ENCODE measurements at regions of chr14 and their contacts with region 1.

Region 1: DNA sequence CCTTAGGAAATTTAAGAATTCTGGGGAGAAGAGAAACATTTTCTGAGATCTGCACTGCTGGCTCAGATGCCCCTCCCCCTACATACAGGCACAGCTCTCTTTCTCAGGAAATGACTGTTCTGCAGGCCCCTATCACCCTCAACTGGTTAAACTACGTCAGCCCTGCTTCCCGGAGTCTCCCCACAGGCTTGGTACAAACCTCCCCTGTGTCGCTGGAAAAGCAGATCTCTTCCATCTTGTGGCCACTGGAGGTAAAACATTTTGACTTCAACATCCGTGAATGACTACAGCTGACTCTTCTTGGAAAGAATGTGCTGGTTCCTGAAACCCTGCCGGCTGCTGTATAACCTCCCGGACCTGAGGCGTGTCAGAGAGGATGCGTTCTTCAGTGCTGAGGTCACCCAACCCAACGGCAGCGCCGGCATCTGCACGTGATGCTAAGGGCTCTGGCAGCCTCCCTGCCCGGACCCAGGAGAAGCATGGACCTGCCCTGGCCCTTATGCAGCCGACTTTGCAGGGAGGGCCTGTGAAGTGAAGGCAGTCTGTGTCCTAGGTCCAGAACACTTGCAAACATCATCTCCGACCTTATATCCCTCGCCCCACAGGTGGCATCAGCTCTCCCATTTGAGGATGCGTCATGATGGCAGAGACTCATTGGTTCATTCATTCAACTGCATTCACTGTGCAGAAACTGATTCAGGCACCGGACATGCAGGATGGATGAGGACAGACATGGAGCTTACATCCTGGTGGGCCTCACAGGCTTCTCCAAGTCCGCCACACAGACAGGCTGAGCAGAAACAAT is 129.3 kb downstream of the GCH1 start:
- DNase-seq: peak; percentile 97 to 99
- ATAC-seq: peak; percentile 93 to 94
- H3K4me3 ChIP-seq: peak overlapping the region; percentile 2; the same call in 1 of the 3 replicates
- H3K27ac ChIP-seq: peak overlapping the region; percentile 77 to 86
- H3K4me1 ChIP-seq: peaks cover 27% of the 10 kb centered on the region
- CTCF ChIP-seq: peak; percentile 63
- EP300 ChIP-seq: peak in 1 of 2 experiments; percentile 51; a peak in 1 of 5 replicates
- POLR2A ChIP-seq: no peak
- RAD21 ChIP-seq: peak; percentile 72 to 80

Region 2: DNA sequence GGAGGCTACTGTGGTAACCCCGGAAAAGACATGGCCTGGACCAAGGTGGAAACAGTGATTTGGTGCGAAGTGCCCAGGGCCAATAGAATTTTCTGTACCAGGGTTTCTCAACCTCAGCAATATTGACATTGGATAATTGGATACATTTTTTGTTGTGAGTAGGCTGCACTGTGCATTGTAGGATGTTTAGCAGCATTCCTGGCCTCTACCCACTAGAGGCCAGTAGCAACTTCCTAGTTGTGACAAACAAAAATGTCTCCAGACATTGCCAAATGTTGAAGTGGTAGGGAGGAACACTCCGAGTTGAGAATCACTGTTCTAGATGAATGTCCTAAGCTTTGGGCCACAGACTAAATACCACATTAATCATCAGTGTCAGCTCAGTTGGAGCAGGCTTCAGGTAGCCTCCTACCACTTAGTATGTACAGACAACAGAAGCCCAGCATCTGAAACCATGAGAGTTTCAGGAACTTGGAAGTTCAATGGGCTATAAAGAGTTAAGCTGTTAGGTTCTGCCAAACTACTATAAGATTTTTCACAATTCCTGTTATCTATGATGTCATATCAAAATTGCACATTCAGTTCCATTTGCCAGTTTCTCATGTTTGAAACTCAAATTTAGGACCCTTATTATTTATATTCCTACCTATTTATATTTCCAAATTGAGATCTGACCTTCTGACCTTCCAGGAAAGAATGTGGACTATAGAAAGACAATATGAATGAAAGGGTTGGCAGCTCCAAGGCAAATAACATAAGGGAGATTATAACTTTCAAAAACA is 269.7 kb before region 1 on chr14:
- CTCF ChIA-PET with region 1: interaction called, 34 read pairs
- POLR2A ChIA-PET with region 1: no interaction called
- DNase-seq: peak in 1 of 2 experiments; percentile 66
- ATAC-seq: peak; percentile 80 to 89
- H3K4me3 ChIP-seq: no peak overlapping the region
- H3K27ac ChIP-seq: 0 out of 6 replicates have a peak overlapping the region, but pooled peaks of 1 of the 2 experiments have one; percentile 39
- H3K4me1 ChIP-seq: no peaks in the 10 kb centered on the region; the same call in 2 of the 3 replicates
- CTCF ChIP-seq: peak; percentile 46
- EP300 ChIP-seq: no peak
- POLR2A ChIP-seq: no peak
- RAD21 ChIP-seq: peak; percentile 39 to 54; a peak in 4 of 5 replicates

Region 3: GRCh38 chr14:54566410-54567223 is 206.8 kb before region 1 on chr14 and contains the start of gene SAMD4A:
- CTCF ChIA-PET with region 1: interaction called, 272 read pairs
- POLR2A ChIA-PET with region 1: interaction called, 78 read pairs
- DNase-seq: peak; percentile 68 to 88
- ATAC-seq: peak; percentile 60 to 71
- H3K4me3 ChIP-seq: peak within 1 kb of the TSS; percentile 75
- H3K27ac ChIP-seq: peak within 1 kb of the TSS; percentile 88 to 98
- H3K4me1 ChIP-seq: peaks cover 35% of the 10 kb centered on the region
- CTCF ChIP-seq: peak; percentile 33
- EP300 ChIP-seq: no peak
- POLR2A ChIP-seq: peak; percentile 21; the same call in 1 of the 2 replicates
- RAD21 ChIP-seq: peak; percentile 52 to 60
- polyA plus RNA-seq, gene SAMD4A: 3.9 and 5.3 TPM in 2 replicates

Region 4: GRCh38 chr14:54683882-54684794 is 89.2 kb before region 1 on chr14:
- CTCF ChIA-PET with region 1: interaction called, 23 read pairs
- POLR2A ChIA-PET with region 1: no interaction called
- DNase-seq: no peak
- ATAC-seq: peak in 1 of 2 experiments; percentile 40; a peak in 2 of 6 replicates
- H3K4me3 ChIP-seq: no peak overlapping the region
- H3K27ac ChIP-seq: peak overlapping the region; percentile 57 to 80
- H3K4me1 ChIP-seq: peaks cover 39% of the 10 kb centered on the region
- CTCF ChIP-seq: no peak
- EP300 ChIP-seq: no peak
- POLR2A ChIP-seq: no peak
- RAD21 ChIP-seq: no peak

Region 5: DNA sequence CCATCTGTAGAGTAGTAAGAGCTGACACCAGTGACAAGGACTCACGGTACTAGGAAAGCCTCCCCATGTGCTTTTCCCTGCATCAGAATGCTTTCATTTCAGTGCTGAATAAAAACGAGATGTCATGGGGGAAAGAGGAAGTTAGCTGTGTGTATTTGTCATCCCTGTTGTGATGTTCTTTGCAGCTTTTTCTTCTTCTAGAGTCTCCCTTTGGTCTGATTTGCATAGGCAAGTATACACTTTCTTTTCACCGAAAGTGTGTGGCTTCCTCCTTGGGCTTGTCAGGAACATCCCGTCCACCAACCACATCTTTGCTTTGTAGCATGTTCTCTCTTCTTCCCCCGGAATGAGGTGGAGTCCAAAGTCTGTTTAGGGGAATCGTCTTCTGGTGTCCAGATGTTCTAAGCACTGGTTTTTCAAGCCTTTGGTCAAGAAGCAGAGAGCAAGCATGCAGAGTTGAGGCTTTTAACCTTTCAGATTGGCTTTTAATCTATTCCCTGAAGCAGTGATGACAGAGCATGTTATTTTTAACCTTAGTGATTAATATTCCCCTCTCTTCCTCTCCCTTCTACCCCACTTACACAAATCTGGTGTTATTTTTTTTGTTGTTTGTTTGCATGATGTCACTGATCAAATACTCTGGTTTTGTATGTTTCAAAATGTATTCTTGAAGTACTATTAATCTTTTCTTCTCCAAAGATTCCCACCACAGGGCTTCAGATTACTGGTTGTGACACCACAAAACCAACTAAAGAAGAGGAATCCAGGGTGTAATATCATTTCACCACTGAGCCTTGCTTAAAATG is 43.0 kb before region 1 on chr14:
- CTCF ChIA-PET with region 1: interaction called, 75 read pairs
- POLR2A ChIA-PET with region 1: no interaction called
- DNase-seq: peak in 1 of 2 experiments; percentile 4
- ATAC-seq: peak in 1 of 2 experiments; percentile 36; a peak in 2 of 6 replicates
- H3K4me3 ChIP-seq: no peak overlapping the region
- H3K27ac ChIP-seq: no peak overlapping the region
- H3K4me1 ChIP-seq: peaks cover 10% of the 10 kb centered on the region; the same call in 2 of the 3 replicates
- CTCF ChIP-seq: no peak
- EP300 ChIP-seq: no peak
- POLR2A ChIP-seq: no peak
- RAD21 ChIP-seq: no peak

Region 6: GRCh38 chr14:54805521-54806322 is 32.3 kb after region 1 on chr14:
- CTCF ChIA-PET with region 1: interaction called, 51 read pairs
- POLR2A ChIA-PET with region 1: no interaction called
- DNase-seq: peak; percentile 82 to 86
- ATAC-seq: peak; percentile 90 to 96
- H3K4me3 ChIP-seq: no peak overlapping the region
- H3K27ac ChIP-seq: no peak overlapping the region
- H3K4me1 ChIP-seq: 0 out of 3 replicates have a peak, but pooled peaks cover 3% of the 10 kb centered on the region
- CTCF ChIP-seq: peak; percentile 95
- EP300 ChIP-seq: no peak
- POLR2A ChIP-seq: no peak
- RAD21 ChIP-seq: peak; percentile 88 to 90